Dorsolateral prefrontal cortex (tissue), 120 donors: ENCODE measurements at regions of chr5 and their contacts with region 1.

Region 1: DNA sequence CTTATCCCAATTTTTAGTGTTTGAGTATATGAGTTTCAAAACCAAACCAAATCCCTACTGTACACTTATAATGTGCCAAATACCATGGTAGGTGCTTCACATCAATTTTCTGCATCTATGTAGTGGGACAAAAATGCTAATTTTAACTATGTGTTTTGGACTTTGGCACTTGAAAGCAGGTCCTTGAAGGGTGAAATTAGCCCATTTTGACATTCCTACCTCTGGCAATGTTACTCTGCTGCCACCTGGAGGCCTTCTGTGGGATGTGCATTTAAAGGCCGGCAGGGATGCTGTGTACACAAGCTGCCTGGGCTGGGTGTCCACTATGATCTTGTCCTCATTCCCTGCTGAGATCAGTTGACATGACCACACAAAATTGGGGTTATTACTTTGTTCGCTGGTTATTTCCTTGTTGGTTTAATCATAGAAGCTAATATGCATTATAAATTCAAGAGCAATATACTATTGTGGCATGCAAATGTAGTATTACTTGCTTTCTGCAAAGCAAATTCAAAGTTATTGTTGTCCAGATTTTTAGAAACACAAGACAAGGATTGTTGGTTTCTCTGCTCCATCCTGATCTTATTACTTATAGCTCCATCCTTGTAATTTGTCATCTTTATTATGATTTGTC is 166.8 kb downstream of the ARHGEF28 start:
- DNase-seq: peak; percentile 59 to 87 (median 75)
- H3K4me3 ChIP-seq: no peak overlapping the region
- H3K27ac ChIP-seq: no peak overlapping the region
- H3K27me3 ChIP-seq: peaks cover 0 to 7% (median 0%) of the 10 kb centered on the region in 45 donors
- CTCF ChIP-seq: peak; percentile 88 to 99 (median 97)

Region 2: DNA sequence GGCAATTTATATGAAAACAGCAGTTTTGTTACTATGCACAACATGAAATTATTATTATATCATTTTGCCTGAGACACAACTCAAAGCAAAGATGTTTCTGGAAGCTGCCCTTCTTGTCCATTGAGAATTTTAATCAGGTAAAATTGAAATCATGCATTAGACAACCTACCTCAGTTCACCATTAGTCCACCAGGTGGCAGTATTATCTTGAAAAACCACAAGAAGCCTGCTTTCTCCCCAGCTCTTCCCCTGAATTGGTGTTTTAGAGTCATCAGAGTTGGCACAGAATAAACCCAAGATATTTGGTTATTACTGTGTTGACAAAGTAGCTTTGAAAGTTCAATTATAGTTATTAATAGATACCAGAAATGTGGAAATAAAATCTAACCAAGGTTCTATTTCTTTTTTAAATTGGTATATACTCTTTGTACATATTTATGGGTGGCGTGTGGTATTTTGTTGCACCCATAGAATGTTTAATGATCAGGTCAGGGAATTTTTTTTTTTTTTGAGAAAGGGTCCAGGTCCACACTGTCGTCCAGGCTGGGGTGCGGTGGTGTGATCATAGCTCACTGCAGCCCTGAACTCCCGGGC is 201.6 kb before region 1 on chr5:
- intact Hi-C with region 1: loop called (anchors 1 to 2 kb)
- DNase-seq: peak in 2 of 10 donors; percentile 22 to 43
- H3K4me3 ChIP-seq: no peak overlapping the region
- H3K27ac ChIP-seq: no peak overlapping the region
- H3K27me3 ChIP-seq: no peaks in the 10 kb centered on the region
- CTCF ChIP-seq: peak; percentile 87 to 100 (median 97)

Region 3: DNA sequence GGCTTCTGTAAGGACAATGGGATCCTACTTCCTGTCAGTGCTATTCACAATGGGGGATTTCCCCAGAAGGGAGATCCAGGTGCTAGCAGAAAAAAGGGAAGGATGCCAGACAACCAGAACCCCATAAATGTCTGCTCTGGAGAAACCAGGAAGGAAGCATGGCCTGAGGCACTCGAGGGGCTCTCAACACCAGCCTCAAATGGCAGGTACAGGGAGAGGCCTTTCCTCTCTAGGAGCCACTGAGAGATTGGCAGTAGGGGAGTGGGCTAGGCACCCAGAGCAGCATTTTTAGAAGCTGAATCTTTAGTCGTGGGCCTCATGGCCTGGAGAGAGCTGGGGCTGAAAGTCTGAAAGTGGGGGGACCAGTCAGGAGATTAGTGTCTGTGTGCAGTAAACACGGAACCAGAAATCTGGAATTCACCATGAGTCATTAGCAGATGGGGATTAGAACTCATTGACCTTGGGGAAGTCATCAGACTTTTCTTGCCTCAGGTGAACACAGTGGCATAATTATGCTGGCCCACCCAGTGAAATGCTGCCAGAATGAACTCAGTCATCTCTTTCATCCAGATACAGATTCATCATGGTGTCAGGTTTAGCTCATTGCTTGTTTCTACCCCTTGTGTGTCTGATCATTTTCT is 138.5 kb before region 1 on chr5:
- intact Hi-C with region 1: loop called in 1 of 2 experiments (anchors 10 kb)
- DNase-seq: no peak
- H3K4me3 ChIP-seq: peak overlapping the region in 1 of 59 donors; percentile 36
- H3K27ac ChIP-seq: peak overlapping the region in 52 of 59 donors; percentile 0 to 83 (median 60)
- H3K27me3 ChIP-seq: no peaks in the 10 kb centered on the region
- CTCF ChIP-seq: no peak